ENCODE measurements at regions of chr1 and their contacts with region 1.

Region 1: DNA sequence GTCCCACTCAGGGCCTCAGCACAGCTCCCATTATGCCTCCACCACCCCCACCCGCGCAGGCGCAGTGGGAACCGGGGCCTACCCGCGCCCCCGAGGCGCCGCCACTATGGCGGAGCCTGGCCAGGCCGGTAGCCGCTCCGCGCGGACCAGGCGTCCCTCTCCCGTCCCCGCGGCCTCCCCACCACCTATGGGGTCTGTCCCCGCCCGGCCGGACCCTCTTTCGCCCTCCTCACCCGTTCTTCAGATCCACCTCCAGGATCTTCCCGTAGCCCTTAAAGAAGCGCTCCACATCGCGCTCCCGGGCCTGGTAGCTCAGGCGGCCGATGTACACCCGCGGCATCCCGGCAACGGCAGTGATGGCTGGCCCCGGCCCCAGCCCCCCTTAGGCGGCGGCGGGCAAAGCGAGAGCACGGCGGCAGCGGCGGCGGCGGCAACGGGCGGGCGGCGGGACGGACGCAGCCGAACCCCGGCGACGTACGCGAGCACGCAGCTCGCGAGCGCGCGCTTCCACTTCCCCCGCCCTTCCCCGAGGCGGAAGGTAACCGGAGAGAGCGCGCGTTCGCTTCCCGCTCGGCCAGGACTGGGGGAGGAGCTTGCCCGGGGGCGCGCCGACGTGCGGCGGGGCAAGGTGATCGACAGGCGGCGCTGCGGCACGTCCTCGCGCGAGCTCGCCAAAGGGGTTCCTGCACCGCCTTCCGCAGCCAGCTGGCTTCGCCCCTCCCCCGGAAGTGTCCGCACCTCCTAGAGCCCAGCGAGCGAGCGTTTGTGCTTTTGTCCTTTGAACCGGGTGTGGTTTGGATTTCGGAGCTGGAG is at the start of gene SRSF4:
- DNase-seq: peak; percentile 92
- H3K4me3 ChIP-seq: peak within 1 kb of the TSS; percentile 95
- H3K27me3 ChIP-seq: no peaks in the 10 kb centered on the region
- CTCF ChIP-seq: peak; percentile 57
- polyA plus RNA-seq, gene SRSF4: 19.6 and 30.7 TPM in 2 replicates

Region 2: GRCh38 chr1:29171089-29171488 is 10.5 kb before region 1 on chr1:
- CTCF ChIA-PET with region 1: interaction called, 11 read pairs
- POLR2A ChIA-PET with region 1: no interaction called
- DNase-seq: no peak
- H3K4me3 ChIP-seq: no peak overlapping the region
- H3K27me3 ChIP-seq: no peaks in the 10 kb centered on the region
- CTCF ChIP-seq: no peak

Region 3: GRCh38 chr1:29197585-29197924 is 15.9 kb after region 1 on chr1:
- CTCF ChIA-PET with region 1: interaction called, 33 read pairs
- POLR2A ChIA-PET with region 1: interaction called, 5 read pairs
- DNase-seq: no peak
- H3K4me3 ChIP-seq: no peak overlapping the region
- H3K27me3 ChIP-seq: no peaks in the 10 kb centered on the region
- CTCF ChIP-seq: peak; percentile 60

Region 4: DNA sequence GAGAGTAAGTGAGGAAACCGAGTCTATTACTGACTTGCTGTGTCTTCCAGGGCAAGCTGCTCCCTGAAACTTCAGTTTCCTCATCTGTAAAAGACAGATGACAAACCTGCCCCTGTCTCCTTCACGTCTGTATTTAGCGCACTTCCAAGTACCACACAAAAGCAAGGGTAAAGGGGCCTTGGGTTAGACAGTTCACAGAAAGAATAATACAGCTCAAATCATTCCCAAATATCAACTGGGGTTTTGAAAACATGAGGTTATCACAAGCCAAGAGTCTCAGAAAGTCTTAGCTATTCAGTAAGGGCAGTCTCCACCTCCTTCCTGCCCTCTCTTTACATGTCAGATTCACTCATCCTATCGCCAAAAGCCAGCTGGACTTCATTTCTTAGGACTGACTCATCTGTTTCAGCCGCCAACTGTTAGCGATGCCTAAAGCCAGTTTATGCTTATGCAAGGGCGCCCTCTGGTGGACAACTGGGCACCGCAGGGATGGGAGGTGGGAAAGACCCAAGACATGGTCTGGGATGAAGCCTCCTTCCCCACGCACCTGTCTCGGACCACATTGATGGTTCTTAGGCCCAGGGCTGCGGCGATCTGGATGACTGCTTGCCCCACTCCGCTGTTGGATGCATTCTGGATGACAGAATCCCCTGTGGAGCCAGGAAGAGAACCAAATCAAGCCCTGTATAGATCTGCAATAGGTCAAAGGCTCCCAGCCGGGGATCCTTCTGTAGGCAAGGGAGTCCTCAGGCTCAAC is 21.1 kb after region 1 on chr1:
- CTCF ChIA-PET with region 1: interaction called, 33 read pairs
- POLR2A ChIA-PET with region 1: interaction called, 5 read pairs
- DNase-seq: peak; percentile 88
- H3K4me3 ChIP-seq: no peak overlapping the region
- H3K27me3 ChIP-seq: no peaks in the 10 kb centered on the region
- CTCF ChIP-seq: peak; percentile 96